ENCODE measurements at regions of chr2 and their contacts with region 1.

Region 1: GRCh38 chr2:238163481-238164198 is 4.9 kb downstream of the ERFE start:
- DNase-seq: no peak
- H3K4me3 ChIP-seq: no peak overlapping the region
- H3K27ac ChIP-seq: no peak overlapping the region
- H3K4me1 ChIP-seq: peaks cover 8% of the 10 kb centered on the region
- H3K27me3 ChIP-seq: no peaks in the 10 kb centered on the region
- CTCF ChIP-seq: no peak

Region 2: GRCh38 chr2:238203094-238203972 is 39.7 kb after region 1 on chr2 and contains the start of gene ILKAP:
- CTCF ChIA-PET with region 1: no interaction called
- POLR2A ChIA-PET with region 1: interaction called, 28 read pairs
- intact Hi-C with region 1: no loop called
- DNase-seq: peak; percentile 59 to 96
- H3K4me3 ChIP-seq: peak within 1 kb of the TSS; percentile 92
- H3K27ac ChIP-seq: no peak within 1 kb of the TSS
- H3K4me1 ChIP-seq: peaks cover 33% of the 10 kb centered on the region
- H3K27me3 ChIP-seq: peaks cover 21% of the 10 kb centered on the region
- CTCF ChIP-seq: no peak
- total RNA-seq, gene ILKAP: 55.6 and 65.2 TPM in 2 replicates

Measured in PC-9 (cell line).